MCF 10A (cell line): ENCODE measurements at regions of chr13 and their contacts with region 1.

Region 1: GRCh38 chr13:67224148-67224846 is 5.8 kb downstream of the PCDH9 start:
- DNase-seq: peak; percentile 84
- H3K4me3 Mint-ChIP-seq: peak overlapping the region; percentile 69
- H3K27ac Mint-ChIP-seq: peak overlapping the region; percentile 21
- H3K4me1 Mint-ChIP-seq: peaks cover 23% of the 10 kb centered on the region
- H3K27me3 Mint-ChIP-seq: no peaks in the 10 kb centered on the region
- CTCF ChIP-seq: peak; percentile 81

Region 2: GRCh38 chr13:66492479-66492878 is 731.8 kb before region 1 on chr13:
- CTCF ChIA-PET with region 1: no interaction called
- POLR2A ChIA-PET with region 1: interaction called, 4 read pairs
- intact Hi-C with region 1: loop called (anchors 5 kb)
- DNase-seq: peak; percentile 26
- H3K4me3 Mint-ChIP-seq: no peak overlapping the region
- H3K27ac Mint-ChIP-seq: no peak overlapping the region
- H3K4me1 Mint-ChIP-seq: no peaks in the 10 kb centered on the region
- H3K27me3 Mint-ChIP-seq: no peaks in the 10 kb centered on the region
- CTCF ChIP-seq: peak; percentile 29

Region 3: DNA sequence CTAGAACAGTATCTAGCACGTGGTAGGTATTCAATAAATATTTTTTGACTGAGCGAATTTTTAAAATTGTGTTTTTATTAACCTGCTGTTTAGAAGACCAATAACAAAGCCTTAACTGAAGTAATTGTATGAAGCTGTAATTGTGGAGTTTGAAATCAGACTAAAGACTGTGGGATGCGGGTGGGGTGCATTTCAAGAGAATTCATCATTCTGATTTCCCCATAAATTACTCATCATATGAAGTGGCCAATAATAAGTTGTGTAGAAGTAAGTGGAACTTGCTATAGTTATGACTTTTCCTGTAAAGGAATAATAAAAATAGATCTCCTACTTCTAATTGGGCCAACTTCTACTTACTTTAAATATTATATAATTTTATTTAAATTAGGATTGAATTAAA is 443.5 kb before region 1 on chr13:
- CTCF ChIA-PET with region 1: no interaction called
- POLR2A ChIA-PET with region 1: no interaction called
- intact Hi-C with region 1: loop called (anchors 10 kb)
- DNase-seq: peak; percentile 35
- H3K4me3 Mint-ChIP-seq: no peak overlapping the region
- H3K27ac Mint-ChIP-seq: peak overlapping the region; percentile 51
- H3K4me1 Mint-ChIP-seq: peaks cover 9% of the 10 kb centered on the region
- H3K27me3 Mint-ChIP-seq: no peaks in the 10 kb centered on the region
- CTCF ChIP-seq: no peak

Region 4: DNA sequence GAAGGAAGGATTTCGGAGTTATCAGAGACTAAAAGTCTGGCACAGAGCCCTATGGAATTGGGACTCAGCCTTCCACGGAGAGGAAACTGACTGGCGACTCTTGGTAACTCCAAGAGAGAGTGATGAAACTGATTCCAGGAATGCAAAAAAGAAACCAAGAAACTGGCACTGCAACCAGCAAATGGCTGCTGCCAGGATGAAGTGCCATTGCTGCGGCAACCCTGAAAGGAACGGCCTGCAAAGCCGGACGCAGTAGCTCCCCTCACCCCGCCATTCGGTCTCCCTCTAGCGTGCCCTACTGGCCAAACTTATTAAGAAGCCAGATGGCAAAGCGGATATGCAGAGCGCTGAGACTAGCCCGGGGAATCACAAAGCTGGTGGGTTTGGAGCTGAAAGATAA is 230.2 kb before region 1 on chr13:
- CTCF ChIA-PET with region 1: no interaction called
- POLR2A ChIA-PET with region 1: no interaction called
- intact Hi-C with region 1: loop called (anchors 10 kb)
- DNase-seq: peak; percentile 70
- H3K4me3 Mint-ChIP-seq: peak overlapping the region; percentile 46
- H3K27ac Mint-ChIP-seq: peak overlapping the region; percentile 31
- H3K4me1 Mint-ChIP-seq: peaks cover 13% of the 10 kb centered on the region
- H3K27me3 Mint-ChIP-seq: no peaks in the 10 kb centered on the region
- CTCF ChIP-seq: peak; percentile 42

Region 5: DNA sequence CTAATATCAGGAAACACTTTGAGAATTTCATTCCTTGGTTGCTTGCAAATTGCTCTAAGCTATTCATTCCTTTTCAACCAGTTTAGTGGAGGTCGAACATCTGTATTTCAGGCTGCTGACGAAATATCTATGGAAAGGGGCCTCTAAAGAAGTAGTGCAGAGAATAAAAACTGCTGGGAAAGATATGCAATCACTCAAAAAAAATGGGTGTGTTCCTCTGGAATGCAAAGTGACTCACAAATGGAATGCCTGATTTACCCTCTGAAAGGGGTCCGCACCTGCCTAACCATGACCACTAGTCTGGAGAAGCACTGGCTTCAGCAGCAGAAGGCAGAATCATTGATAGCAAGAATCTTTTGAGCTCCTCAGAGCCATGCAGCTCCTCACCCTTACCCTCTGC is 123.6 kb before region 1 on chr13:
- CTCF ChIA-PET with region 1: no interaction called
- POLR2A ChIA-PET with region 1: no interaction called
- intact Hi-C with region 1: loop called (anchors 5 kb)
- DNase-seq: peak; percentile 23
- H3K4me3 Mint-ChIP-seq: peak overlapping the region; percentile 3
- H3K27ac Mint-ChIP-seq: peak overlapping the region; percentile 78
- H3K4me1 Mint-ChIP-seq: peaks cover 24% of the 10 kb centered on the region
- H3K27me3 Mint-ChIP-seq: no peaks in the 10 kb centered on the region
- CTCF ChIP-seq: no peak

Region 6: GRCh38 chr13:67438465-67438864 is 214.2 kb after region 1 on chr13:
- CTCF ChIA-PET with region 1: no interaction called
- POLR2A ChIA-PET with region 1: no interaction called
- intact Hi-C with region 1: no loop called
- DNase-seq: peak; percentile 30
- H3K4me3 Mint-ChIP-seq: no peak overlapping the region
- H3K27ac Mint-ChIP-seq: no peak overlapping the region
- H3K4me1 Mint-ChIP-seq: no peaks in the 10 kb centered on the region
- H3K27me3 Mint-ChIP-seq: no peaks in the 10 kb centered on the region
- CTCF ChIP-seq: peak; percentile 10